ENCODE measurements at regions of chr3 and their contacts with region 1.

Region 1: DNA sequence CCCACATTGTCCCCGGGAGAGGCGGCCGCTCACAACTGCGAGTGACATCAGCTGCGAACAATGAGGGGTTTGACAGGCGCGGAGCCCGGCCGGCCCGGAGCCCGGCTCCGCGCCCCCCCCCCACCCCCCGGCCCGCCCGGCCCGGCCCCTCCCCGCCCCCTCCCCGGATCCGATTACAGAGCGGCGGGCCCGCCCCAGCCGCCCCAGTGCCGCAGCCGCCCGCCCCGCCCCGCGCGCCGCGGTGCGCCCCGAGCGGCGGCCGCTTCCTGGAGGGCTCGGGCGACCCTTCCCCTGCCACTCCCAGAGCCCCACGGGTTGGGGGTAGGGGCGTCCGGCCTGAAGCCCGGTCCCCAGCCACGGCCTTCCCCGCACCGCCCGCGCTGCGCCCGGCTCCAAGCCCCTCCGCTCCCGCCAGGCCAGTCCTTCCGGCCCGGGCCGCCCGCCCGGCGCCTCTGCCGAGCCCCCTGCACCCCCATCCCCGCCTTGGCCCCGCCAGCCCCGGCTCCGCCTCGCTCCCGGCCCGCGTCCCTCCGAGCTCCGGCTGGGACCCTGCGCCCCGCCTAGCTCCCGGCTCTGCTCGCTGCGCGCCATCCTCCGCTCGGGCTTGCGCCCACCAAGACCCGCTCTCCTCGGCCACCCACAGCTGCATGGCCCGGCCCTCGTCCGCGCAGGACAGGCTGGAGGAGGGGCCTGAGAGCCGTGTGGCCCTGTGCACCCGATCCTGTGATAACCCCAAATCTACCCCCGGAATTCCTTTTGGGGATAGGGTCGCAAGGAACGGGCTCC is at the start of gene PCBP4:
- DNase-seq: no peak
- H3K4me3 ChIP-seq: peak within 1 kb of the TSS; percentile 44 to 83 (median 75)
- H3K27ac ChIP-seq: peak within 1 kb of the TSS; percentile 21
- H3K4me1 ChIP-seq: peaks cover 19% of the 10 kb centered on the region
- H3K27me3 ChIP-seq: no peaks in the 10 kb centered on the region
- CTCF ChIP-seq: no peak
- total RNA-seq, gene PCBP4: 51.0 to 61.1 TPM

Region 2: GRCh38 chr3:51311055-51311454 is 656.5 kb before region 1 on chr3:
- CTCF ChIA-PET with region 1: no interaction called
- dilution Hi-C with region 1: no loop called
- in situ Hi-C with region 1: no loop called
- intact Hi-C with region 1: no loop called
- DNase-seq: peak; percentile 18
- H3K4me3 ChIP-seq: no peak overlapping the region
- H3K27ac ChIP-seq: no peak overlapping the region
- H3K4me1 ChIP-seq: no peaks in the 10 kb centered on the region
- H3K27me3 ChIP-seq: no peaks in the 10 kb centered on the region
- CTCF ChIP-seq: peak; percentile 35 to 50

Region 3: GRCh38 chr3:51734572-51734907 is 233.0 kb before region 1 on chr3:
- CTCF ChIA-PET with region 1: no interaction called
- dilution Hi-C with region 1: loop called (anchors 10 kb)
- in situ Hi-C with region 1: no loop called
- intact Hi-C with region 1: no loop called
- DNase-seq: no peak
- H3K4me3 ChIP-seq: no peak overlapping the region
- H3K27ac ChIP-seq: no peak overlapping the region
- H3K4me1 ChIP-seq: peaks cover 6% of the 10 kb centered on the region
- H3K27me3 ChIP-seq: peaks cover 6% of the 10 kb centered on the region
- CTCF ChIP-seq: no peak